ENCODE measurements at regions of chr4 and their contacts with region 1.

Region 1: DNA sequence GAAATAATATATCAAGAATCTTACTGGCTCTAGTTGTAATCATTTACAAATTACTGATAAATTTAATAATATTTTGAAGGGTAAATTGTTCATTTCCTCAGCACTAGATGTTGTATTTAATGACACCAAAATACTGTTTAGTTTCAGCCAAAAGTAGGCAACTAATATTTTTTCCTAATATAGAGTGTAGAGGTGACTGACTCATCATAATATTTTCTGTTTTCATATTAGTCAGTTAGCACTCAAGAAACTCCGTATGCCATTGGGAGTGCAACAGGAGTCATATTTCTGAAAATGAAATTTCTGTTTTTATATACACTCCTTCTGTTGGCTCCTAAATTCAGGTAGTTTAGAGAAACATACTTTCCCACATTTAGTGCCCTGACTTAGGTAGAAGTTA is 36.6 kb upstream of the PTPN13 start:
- DNase-seq: no peak
- H3K4me3 ChIP-seq: no peak overlapping the region
- H3K27ac ChIP-seq: peak overlapping the region; percentile 99
- H3K4me1 ChIP-seq: peaks cover 86% of the 10 kb centered on the region
- H3K27me3 ChIP-seq: no peaks in the 10 kb centered on the region
- CTCF ChIP-seq: no peak

Region 2: GRCh38 chr4:86497980-86498862 is 59.3 kb before region 1 on chr4:
- CTCF ChIA-PET with region 1: interaction called, 5 read pairs
- POLR2A ChIA-PET with region 1: no interaction called
- intact Hi-C with region 1: loop called (anchors 2 kb)
- DNase-seq: peak; percentile 77
- H3K4me3 ChIP-seq: no peak overlapping the region
- H3K27ac ChIP-seq: peak overlapping the region; percentile 83
- H3K4me1 ChIP-seq: peaks cover 58% of the 10 kb centered on the region
- H3K27me3 ChIP-seq: no peaks in the 10 kb centered on the region
- CTCF ChIP-seq: peak; percentile 73

Region 3: GRCh38 chr4:86965019-86965976 is 407.8 kb after region 1 on chr4:
- CTCF ChIA-PET with region 1: no interaction called
- POLR2A ChIA-PET with region 1: no interaction called
- intact Hi-C with region 1: loop called (anchors 5 kb)
- DNase-seq: peak; percentile 20
- H3K4me3 ChIP-seq: no peak overlapping the region
- H3K27ac ChIP-seq: peak overlapping the region; percentile 96
- H3K4me1 ChIP-seq: peaks cover 86% of the 10 kb centered on the region
- H3K27me3 ChIP-seq: no peaks in the 10 kb centered on the region
- CTCF ChIP-seq: no peak

Measured in A673 (cell line).